RWPE1 (cell line): ENCODE measurements at regions of chr12 and their contacts with region 1.

Region 1: GRCh38 chr12:106919910-106920544 is 35.7 kb upstream of the TMEM263 start:
- DNase-seq: peak; percentile 46
- H3K27ac ChIP-seq: no peak overlapping the region
- CTCF ChIP-seq: peak; percentile 82

Region 2: DNA sequence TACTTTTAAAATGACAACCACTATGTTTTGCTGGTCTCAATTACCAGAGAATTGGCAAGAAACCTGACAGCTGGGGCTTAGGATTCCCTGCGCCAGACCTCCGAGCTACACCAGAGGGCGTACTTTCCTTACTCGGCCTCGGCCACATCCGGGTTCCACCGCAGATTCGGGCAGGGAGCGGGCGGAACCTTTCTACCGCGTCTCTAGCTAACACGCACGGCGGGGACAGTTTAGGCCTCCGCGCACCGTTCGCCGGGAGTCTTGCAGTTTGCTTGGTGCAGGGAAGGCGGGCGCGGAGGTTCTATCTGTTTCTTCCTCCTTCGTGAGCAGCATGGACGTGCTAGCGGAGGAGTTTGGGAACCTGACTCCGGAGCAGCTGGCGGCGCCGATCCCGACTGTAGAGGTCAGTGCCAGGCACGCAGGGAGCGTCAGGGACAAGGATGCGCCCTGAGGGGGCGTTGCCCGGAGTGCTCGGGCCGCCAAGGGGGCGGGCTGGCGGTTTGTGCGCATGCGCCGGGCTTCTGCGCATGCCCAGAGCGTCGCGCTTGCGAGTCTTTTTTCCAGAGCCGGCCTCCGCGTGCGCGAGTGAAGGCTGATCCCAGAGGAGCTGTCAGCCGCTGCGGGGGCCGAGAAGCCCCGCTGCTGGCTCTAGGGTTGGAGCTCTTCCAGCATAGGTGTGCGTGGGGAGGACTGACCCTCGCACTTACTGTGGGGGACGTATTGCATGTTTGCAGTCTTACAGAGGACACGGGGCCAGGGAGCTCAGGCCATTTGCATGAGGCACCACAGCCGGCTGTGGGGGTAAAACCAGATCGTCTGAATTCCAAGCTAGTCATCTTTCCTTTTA is 562.3 kb before region 1 on chr12 and contains the start of gene POLR3B:
- CTCF ChIA-PET with region 1: interaction called, 10 read pairs
- POLR2A ChIA-PET with region 1: no interaction called
- DNase-seq: peak; percentile 94
- H3K27ac ChIP-seq: peak within 1 kb of the TSS; percentile 94
- CTCF ChIP-seq: peak; percentile 88

Region 3: DNA sequence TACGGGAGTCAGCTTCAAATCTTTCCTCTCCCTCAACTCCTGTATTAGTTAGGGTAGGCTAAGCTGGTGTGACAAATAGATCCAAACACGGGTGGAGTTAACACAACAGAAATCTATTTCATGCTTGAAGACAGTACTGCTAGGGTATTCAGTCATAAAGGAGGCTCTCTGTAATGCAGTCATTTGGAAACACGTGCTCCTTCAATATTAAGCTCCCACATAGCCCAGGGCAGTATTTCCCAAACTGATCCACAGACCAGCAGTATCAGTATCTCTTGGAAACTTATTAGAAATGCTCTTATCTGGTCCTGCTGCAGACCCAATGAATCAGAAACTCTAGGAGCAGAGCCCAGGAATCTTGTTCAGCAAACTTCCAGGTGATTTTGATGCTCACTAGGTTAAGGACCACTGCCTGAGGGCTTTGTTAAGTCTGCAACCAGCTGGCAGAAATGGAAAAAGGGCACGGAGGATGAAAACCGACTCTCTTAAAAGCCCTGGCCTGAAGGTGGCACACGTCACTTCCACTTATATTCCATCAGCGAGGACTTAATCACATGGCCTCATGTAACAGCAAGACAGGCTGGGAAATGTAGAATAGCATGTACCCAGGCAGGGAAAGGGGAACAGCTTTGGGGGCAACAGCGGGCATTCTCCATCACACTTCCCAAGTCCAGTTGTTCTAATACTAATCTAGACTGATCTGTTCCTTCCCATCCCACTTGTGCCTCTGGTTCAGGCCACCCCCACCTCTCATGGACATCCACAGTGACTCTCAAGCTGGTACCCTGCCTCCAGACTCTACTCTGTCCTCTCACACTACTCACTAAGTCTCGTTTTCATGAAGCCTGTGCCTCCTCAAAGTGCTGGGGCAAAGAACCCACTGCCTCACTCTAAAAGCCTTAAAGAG is 183.7 kb before region 1 on chr12:
- CTCF ChIA-PET with region 1: no interaction called
- POLR2A ChIA-PET with region 1: no interaction called
- DNase-seq: no peak
- H3K27ac ChIP-seq: no peak overlapping the region
- CTCF ChIP-seq: no peak

Region 4: GRCh38 chr12:106908561-106908960 is 11.5 kb before region 1 on chr12:
- CTCF ChIA-PET with region 1: interaction called, 10 read pairs
- POLR2A ChIA-PET with region 1: no interaction called
- DNase-seq: no peak
- H3K27ac ChIP-seq: no peak overlapping the region
- CTCF ChIP-seq: no peak